ENCODE measurements at regions of chr12 and their contacts with region 1.

Region 1: GRCh38 chr12:2884810-2885209 is 5.9 kb upstream of the TULP3 start:
- DNase-seq: no peak
- H3K4me3 Mint-ChIP-seq: no peak overlapping the region
- H3K27ac Mint-ChIP-seq: no peak overlapping the region
- H3K4me1 Mint-ChIP-seq: peaks cover 16% of the 10 kb centered on the region
- H3K27me3 Mint-ChIP-seq: no peaks in the 10 kb centered on the region
- CTCF ChIP-seq: no peak

Region 2: GRCh38 chr12:2944401-2945047 is 59.7 kb after region 1 on chr12:
- CTCF ChIA-PET with region 1: interaction called, 10 read pairs
- intact Hi-C with region 1: loop called (anchors 10 kb)
- DNase-seq: peak; percentile 84
- H3K4me3 Mint-ChIP-seq: peak overlapping the region; percentile 66
- H3K27ac Mint-ChIP-seq: no peak overlapping the region
- H3K4me1 Mint-ChIP-seq: peaks cover 8% of the 10 kb centered on the region
- H3K27me3 Mint-ChIP-seq: no peaks in the 10 kb centered on the region
- CTCF ChIP-seq: peak; percentile 79

Region 3: DNA sequence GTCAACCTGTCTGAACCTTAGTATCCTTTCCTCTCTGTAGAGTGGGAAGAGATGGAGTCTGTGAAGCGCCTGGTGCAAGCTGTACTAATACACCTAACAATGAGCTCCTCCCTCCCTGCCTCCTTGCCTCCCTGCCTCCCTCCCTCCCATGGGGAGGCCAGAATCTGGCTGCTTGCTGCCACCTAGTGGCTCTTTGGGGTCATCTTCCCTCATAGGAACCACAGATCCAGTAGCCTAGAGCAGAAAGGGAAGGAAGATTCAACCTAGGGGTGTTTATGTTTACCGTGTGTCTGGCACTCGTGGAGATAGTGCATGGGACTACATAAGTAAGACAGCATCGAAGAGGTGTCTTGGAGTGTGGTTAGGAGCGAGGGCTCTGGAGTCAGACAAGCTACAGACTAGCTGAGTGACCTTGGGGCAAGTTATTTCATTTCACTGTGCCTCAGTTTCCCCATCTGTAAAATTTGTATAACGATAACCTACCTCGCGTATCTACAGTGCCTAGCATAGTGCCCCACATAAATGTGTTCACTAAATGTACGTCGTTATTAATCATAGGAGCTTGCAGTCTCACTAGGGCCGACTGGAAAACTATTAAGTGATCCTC is 156.9 kb after region 1 on chr12:
- CTCF ChIA-PET with region 1: interaction called, 11 read pairs
- intact Hi-C with region 1: loop called (anchors 10 kb)
- DNase-seq: peak; percentile 72
- H3K4me3 Mint-ChIP-seq: no peak overlapping the region
- H3K27ac Mint-ChIP-seq: no peak overlapping the region
- H3K4me1 Mint-ChIP-seq: no peaks in the 10 kb centered on the region
- H3K27me3 Mint-ChIP-seq: no peaks in the 10 kb centered on the region
- CTCF ChIP-seq: peak; percentile 64